ENCODE measurements at regions of chr2 and their contacts with region 1.

Region 1: DNA sequence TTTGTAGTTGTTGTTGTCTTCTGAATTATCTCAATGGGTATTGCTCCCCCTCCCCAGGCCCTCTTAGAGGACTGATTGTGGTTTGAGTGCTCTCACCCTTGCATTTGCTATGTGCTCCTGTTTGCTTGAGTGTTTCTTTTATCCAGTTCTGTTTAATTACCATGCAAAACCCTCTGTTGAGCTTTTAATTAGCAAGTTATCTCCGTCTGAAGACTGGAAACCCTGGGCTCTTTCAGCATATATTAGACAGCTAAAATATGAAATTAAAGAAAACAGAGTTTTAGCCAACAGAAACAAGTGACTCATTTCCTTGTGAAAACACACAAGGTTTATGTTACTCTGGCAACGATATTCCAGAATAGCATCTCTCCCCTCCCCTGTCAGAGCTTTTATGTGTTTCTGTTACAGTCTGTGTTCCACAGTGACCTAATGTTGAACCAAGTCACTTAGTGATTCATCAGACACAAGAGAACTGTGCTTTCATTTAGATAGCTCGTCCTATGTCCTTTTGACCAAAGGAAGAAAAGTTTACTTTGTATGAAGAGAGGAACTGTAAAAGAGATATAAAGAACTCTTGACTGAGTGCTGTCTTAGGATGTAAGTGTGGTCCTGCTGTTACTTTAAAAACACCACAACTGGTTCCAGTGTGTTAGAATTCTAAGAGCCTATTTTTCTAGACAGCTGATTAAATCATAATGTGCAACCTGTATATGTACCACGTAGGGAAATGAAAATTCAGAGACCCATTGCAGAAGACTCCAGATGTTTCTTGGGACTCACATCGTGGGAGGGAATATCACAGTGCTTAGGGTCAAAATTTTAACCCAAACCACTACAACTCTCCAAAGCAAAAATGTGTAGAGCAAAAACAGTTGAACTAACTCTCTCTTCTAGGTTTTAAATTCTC is 172.8 kb upstream of the RBMS1 start:
- DNase-seq: peak; percentile 97
- ATAC-seq: peak; percentile 97
- H3K4me3 ChIP-seq: peak overlapping the region; percentile 52
- H3K27ac ChIP-seq: peak overlapping the region; percentile 92
- H3K4me1 ChIP-seq: peaks cover 40% of the 10 kb centered on the region
- H3K27me3 ChIP-seq: no peaks in the 10 kb centered on the region
- CTCF ChIP-seq: no peak

Region 2: DNA sequence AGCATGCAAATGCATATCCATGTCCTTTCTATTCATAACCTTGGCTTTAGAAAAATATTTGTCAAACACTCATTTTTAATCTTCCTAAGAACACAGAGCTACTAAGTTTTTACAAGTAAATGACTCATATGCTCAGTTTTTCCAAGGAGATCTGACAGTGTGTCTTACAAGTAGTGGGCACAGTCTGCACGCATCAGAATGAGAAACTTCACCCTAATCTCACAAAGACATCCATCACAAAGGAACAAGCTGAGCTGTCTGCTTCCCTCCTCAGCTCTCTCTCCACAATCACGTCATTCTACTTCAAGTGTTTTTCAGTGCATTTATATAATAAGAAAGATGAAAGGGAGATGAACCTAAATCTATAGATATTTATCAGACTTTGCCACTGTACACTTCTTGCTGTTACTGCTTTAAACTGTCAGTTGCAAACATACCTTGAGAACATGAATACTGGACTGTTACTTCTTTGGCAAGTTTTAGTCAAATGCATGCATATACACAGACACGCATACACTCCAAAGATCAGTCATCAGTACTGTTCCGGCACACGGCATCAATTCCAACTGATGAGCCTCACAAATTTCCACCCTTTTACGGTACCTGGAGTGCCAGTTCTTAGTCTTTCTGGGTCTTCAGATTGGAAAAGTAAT is 248.5 kb before region 1 on chr2:
- CTCF ChIA-PET with region 1: no interaction called
- POLR2A ChIA-PET with region 1: no interaction called
- intact Hi-C with region 1: loop called (anchors 5 kb)
- DNase-seq: peak; percentile 90
- ATAC-seq: peak; percentile 76
- H3K4me3 ChIP-seq: peak overlapping the region; percentile 55
- H3K27ac ChIP-seq: peak overlapping the region; percentile 95
- H3K4me1 ChIP-seq: peaks cover 64% of the 10 kb centered on the region
- H3K27me3 ChIP-seq: no peaks in the 10 kb centered on the region
- CTCF ChIP-seq: no peak

Region 3: GRCh38 chr2:160613466-160614153 is 52.8 kb before region 1 on chr2:
- CTCF ChIA-PET with region 1: no interaction called
- POLR2A ChIA-PET with region 1: no interaction called
- intact Hi-C with region 1: loop called (anchors 1 kb)
- DNase-seq: peak; percentile 96
- ATAC-seq: peak; percentile 93
- H3K4me3 ChIP-seq: no peak overlapping the region
- H3K27ac ChIP-seq: peak overlapping the region; percentile 61
- H3K4me1 ChIP-seq: peaks cover 20% of the 10 kb centered on the region
- H3K27me3 ChIP-seq: no peaks in the 10 kb centered on the region
- CTCF ChIP-seq: no peak

Region 4: GRCh38 chr2:160752496-160753330 is 86.3 kb after region 1 on chr2:
- CTCF ChIA-PET with region 1: no interaction called
- POLR2A ChIA-PET with region 1: no interaction called
- intact Hi-C with region 1: loop called (anchors 1 kb)
- DNase-seq: peak; percentile 91
- ATAC-seq: peak; percentile 56
- H3K4me3 ChIP-seq: peak overlapping the region; percentile 51
- H3K27ac ChIP-seq: peak overlapping the region; percentile 99
- H3K4me1 ChIP-seq: peaks cover 61% of the 10 kb centered on the region
- H3K27me3 ChIP-seq: no peaks in the 10 kb centered on the region
- CTCF ChIP-seq: no peak